HEK293 (cell line): ENCODE measurements at regions of chr6 and their contacts with region 1.

Region 1: GRCh38 chr6:64505312-64505711 is 869.7 kb downstream of the PHF3 start:
- H3K4me3 ChIP-seq: no peak overlapping the region
- H3K27ac ChIP-seq: no peak overlapping the region
- H3K4me1 ChIP-seq: no peaks in the 10 kb centered on the region
- CTCF ChIP-seq: peak; percentile 18; the same call in 1 of the 2 replicates

Region 2: GRCh38 chr6:64482631-64483030 is 22.7 kb before region 1 on chr6:
- CTCF ChIA-PET with region 1: interaction called, 10 read pairs
- POLR2A ChIA-PET with region 1: no interaction called
- H3K4me3 ChIP-seq: no peak overlapping the region
- H3K27ac ChIP-seq: no peak overlapping the region
- H3K4me1 ChIP-seq: no peaks in the 10 kb centered on the region
- CTCF ChIP-seq: no peak

Region 3: DNA sequence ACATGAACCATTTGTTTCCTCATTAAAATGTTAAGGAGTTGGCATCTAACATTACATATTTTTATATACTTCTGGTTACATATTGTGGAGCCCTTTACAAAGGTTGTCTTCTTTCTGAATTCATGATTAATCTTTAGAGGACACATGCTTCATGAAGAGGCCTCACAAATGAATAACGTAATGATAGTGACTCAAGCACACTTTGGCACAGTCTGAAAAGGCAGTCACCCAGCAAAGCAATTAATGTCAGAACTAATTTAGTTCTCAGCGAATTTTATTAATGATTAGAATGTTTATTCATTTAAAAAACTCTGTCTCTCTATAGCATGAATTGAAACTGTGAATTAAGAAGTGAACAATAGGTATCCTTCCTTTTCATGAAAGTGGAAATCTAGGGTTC is 15.5 kb before region 1 on chr6:
- CTCF ChIA-PET with region 1: interaction called, 15 read pairs
- POLR2A ChIA-PET with region 1: no interaction called
- H3K4me3 ChIP-seq: no peak overlapping the region
- H3K27ac ChIP-seq: no peak overlapping the region
- H3K4me1 ChIP-seq: no peaks in the 10 kb centered on the region
- CTCF ChIP-seq: no peak

Region 4: GRCh38 chr6:64520050-64520449 is 14.7 kb after region 1 on chr6:
- CTCF ChIA-PET with region 1: interaction called, 28 read pairs
- POLR2A ChIA-PET with region 1: no interaction called
- H3K4me3 ChIP-seq: no peak overlapping the region
- H3K27ac ChIP-seq: no peak overlapping the region
- H3K4me1 ChIP-seq: no peaks in the 10 kb centered on the region
- CTCF ChIP-seq: no peak